Transverse colon (tissue), 4 donors: ENCODE measurements at regions of chr14 and their contacts with region 1.

Region 1: DNA sequence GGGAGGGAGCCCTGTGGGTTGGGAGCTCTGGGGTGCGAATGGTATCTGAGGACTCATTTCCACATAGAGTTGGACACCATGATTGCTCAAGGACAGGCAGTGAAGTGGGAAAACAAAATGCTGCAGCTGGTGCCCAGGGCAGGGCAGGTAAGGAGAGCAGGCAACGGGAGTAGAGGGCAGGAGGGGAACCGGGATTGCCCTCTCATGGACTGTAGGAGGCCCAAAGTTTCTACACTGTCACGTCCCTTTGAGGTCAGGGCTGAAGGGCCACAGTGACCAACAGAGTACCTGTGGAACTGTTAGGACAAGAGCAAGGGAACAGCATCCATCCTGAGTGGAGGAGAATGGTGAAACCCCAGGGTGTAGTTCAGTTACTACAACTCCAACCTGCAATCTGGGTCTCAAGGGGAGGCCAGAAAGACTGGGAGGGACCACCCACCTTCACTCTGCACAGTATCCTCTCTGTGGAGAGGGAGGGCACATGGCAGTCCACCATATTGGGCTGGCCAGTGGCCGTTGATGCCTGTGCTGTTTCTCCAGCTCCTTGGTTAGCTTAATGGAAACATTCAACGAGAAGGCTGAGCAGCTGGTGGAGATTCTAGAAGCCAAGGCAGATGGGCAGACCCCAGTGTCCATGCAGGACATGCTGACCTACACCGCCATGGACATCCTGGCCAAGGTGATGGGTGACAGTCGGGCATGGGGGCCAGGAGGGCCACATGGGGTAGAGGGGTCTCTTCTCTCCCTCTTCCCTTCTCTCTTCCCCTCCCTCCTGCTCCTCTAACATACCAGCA is 22.2 kb downstream of the CYP46A1 start:
- DNase-seq: no peak
- H3K4me3 ChIP-seq: no peak overlapping the region
- H3K27ac ChIP-seq: no peak overlapping the region
- H3K4me1 ChIP-seq: no peaks in the 10 kb centered on the region
- H3K27me3 ChIP-seq: peaks cover 4% of the 10 kb centered on the region
- CTCF ChIP-seq: no peak
- EP300 ChIP-seq: no peak
- POLR2A ChIP-seq: no peak

Region 2: GRCh38 chr14:99360774-99361595 is 345.3 kb before region 1 on chr14:
- in situ Hi-C with region 1: no loop called
- intact Hi-C with region 1: no loop called
- DNase-seq: no peak
- H3K4me3 ChIP-seq: no peak overlapping the region
- H3K27ac ChIP-seq: no peak overlapping the region
- H3K4me1 ChIP-seq: no peaks in the 10 kb centered on the region
- H3K27me3 ChIP-seq: no peaks in the 10 kb centered on the region
- CTCF ChIP-seq: no peak
- EP300 ChIP-seq: no peak
- POLR2A ChIP-seq: no peak

Region 3: GRCh38 chr14:99670361-99671229 is 35.7 kb before region 1 on chr14:
- in situ Hi-C with region 1: no loop called
- intact Hi-C with region 1: loop called (anchors 1 kb)
- DNase-seq: no peak
- H3K4me3 ChIP-seq: no peak overlapping the region
- H3K27ac ChIP-seq: no peak overlapping the region
- H3K4me1 ChIP-seq: peaks cover 0 to 13% (median 4%) of the 10 kb centered on the region in 4 donors
- H3K27me3 ChIP-seq: no peaks in the 10 kb centered on the region
- CTCF ChIP-seq: no peak
- EP300 ChIP-seq: no peak
- POLR2A ChIP-seq: no peak